Activated T-helper 1 cell treated with anti-CD3 and anti-CD28 coated beads, Interleukin-12 subunit alpha, Interleukin-12 subunit beta, Interleukin-2, Interleukin-4 antibody, amounts not matched to agents 30 ng/mL and 10 ng/mL and 1 ng/mL, durations not matched to agents 14 hours and 24 hours and 36 hours (primary cell): ENCODE measurements at regions of chr10 and their contacts with region 1.

Region 1: DNA sequence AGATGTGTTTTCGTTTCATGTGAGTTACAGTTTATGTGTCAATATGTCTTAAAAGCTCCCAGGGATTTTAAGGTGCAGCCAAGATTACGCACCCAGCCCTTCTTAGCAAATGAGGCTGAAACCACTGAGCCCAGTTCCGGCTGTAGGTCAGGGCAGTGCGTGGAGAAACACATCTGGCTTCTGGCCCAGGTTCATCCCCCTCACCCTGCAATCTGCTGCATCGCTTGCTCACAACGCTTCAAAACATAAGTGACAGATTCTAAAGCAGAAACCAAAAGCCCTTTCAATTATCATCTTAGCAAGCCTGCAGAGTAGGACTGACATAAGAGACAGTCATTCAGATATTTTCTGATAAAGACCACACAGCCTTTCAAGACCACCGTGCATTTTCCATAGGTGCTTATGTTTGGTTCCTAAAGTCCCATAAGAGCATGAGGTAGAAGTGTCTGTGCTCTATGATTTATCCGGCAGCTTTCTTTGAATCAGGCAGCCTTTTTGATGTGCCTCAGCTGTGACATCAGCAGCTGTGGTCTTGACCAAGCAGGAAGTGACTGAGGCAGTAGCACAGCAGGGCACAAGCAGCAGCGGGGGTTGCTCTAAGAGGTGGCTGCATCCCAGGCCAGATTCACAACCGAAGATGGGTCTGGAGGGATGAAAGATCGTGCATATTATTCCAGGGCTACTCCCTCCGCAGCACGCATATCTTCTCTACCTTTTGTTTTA is 72.1 kb upstream of the LYZL2 start:
- DNase-seq: peak; percentile 74
- H3K4me3 Mint-ChIP-seq: peak overlapping the region; percentile 73
- H3K27ac Mint-ChIP-seq: peak overlapping the region; percentile 94
- H3K4me1 Mint-ChIP-seq: peaks cover 91% of the 10 kb centered on the region
- H3K27me3 Mint-ChIP-seq: no peaks in the 10 kb centered on the region

Region 2: GRCh38 chr10:29658984-29659965 is 1042.3 kb before region 1 on chr10:
- intact Hi-C with region 1: loop called (anchors 1 kb)
- DNase-seq: peak; percentile 73
- H3K4me3 Mint-ChIP-seq: peak overlapping the region; percentile 2
- H3K27ac Mint-ChIP-seq: peak overlapping the region; percentile 37
- H3K4me1 Mint-ChIP-seq: peaks cover 26% of the 10 kb centered on the region
- H3K27me3 Mint-ChIP-seq: peaks cover 48% of the 10 kb centered on the region

Region 3: GRCh38 chr10:30687698-30688219 is 13.9 kb before region 1 on chr10:
- intact Hi-C with region 1: loop called (anchors 1 kb)
- DNase-seq: peak; percentile 63
- H3K4me3 Mint-ChIP-seq: no peak overlapping the region
- H3K27ac Mint-ChIP-seq: no peak overlapping the region
- H3K4me1 Mint-ChIP-seq: peaks cover 44% of the 10 kb centered on the region
- H3K27me3 Mint-ChIP-seq: peaks cover 5% of the 10 kb centered on the region

Region 4: GRCh38 chr10:30999070-30999712 is 297.6 kb after region 1 on chr10:
- intact Hi-C with region 1: loop called (anchors 2 kb)
- DNase-seq: no peak
- H3K4me3 Mint-ChIP-seq: peak overlapping the region; percentile 77
- H3K27ac Mint-ChIP-seq: peak overlapping the region; percentile 88
- H3K4me1 Mint-ChIP-seq: peaks cover 35% of the 10 kb centered on the region
- H3K27me3 Mint-ChIP-seq: no peaks in the 10 kb centered on the region

Region 5: GRCh38 chr10:31745612-31746376 is 1044.2 kb after region 1 on chr10:
- intact Hi-C with region 1: loop called (anchors 1 kb)
- DNase-seq: peak; percentile 49
- H3K4me3 Mint-ChIP-seq: peak overlapping the region; percentile 2
- H3K27ac Mint-ChIP-seq: peak overlapping the region; percentile 82
- H3K4me1 Mint-ChIP-seq: peaks cover 27% of the 10 kb centered on the region
- H3K27me3 Mint-ChIP-seq: no peaks in the 10 kb centered on the region

Region 6: GRCh38 chr10:32149252-32149955 is 1447.8 kb after region 1 on chr10:
- intact Hi-C with region 1: loop called (anchors 5 kb)
- DNase-seq: peak; percentile 36
- H3K4me3 Mint-ChIP-seq: peak overlapping the region; percentile 45
- H3K27ac Mint-ChIP-seq: peak overlapping the region; percentile 94
- H3K4me1 Mint-ChIP-seq: peaks cover 41% of the 10 kb centered on the region
- H3K27me3 Mint-ChIP-seq: no peaks in the 10 kb centered on the region